ENCODE measurements at regions of chr3 and their contacts with region 1.

Region 1: GRCh38 chr3:69178838-69179739 is 56.7 kb upstream of the LMOD3 start:
- DNase-seq: no peak
- ATAC-seq: peak in 1 of 4 donors; percentile 18
- H3K4me3 ChIP-seq: no peak overlapping the region
- H3K27ac ChIP-seq: peak overlapping the region in 3 of 12 donors; percentile 7 to 43 (median 25)
- H3K4me1 ChIP-seq: peaks cover 0 to 54% (median 28%) of the 10 kb centered on the region in 12 donors
- H3K27me3 ChIP-seq: no peaks in the 10 kb centered on the region
- CTCF ChIP-seq: no peak
- POLR2A ChIP-seq: no peak

Region 2: GRCh38 chr3:69065318-69065964 is 113.6 kb before region 1 on chr3:
- intact Hi-C with region 1: no loop called
- DNase-seq: no peak
- ATAC-seq: no peak
- H3K4me3 ChIP-seq: no peak overlapping the region
- H3K27ac ChIP-seq: no peak overlapping the region
- H3K4me1 ChIP-seq: peaks cover 0 to 7% (median 0%) of the 10 kb centered on the region in 12 donors
- H3K27me3 ChIP-seq: no peaks in the 10 kb centered on the region
- CTCF ChIP-seq: no peak
- POLR2A ChIP-seq: no peak

Region 3: DNA sequence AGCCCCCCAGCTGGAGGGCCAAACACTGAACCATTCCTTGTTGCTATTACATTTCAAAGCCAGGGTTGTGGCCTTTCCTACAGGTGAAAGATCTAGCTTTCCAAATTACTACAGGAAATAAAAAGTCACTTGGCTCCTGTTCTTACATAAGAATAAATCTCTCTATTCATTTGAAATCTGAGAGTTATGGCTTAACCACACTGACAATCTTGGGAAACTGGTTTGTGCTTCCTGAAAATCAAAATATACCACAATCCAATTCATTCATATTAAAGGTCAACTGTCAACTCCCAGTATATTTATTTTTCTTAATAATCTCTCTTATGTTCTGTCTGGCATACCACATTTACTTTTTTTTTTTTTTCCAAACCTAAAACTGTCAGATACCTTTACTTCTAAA is 47.0 kb after region 1 on chr3:
- intact Hi-C with region 1: loop called in 1 of 10 experiments (anchors 10 kb)
- DNase-seq: no peak
- ATAC-seq: no peak
- H3K4me3 ChIP-seq: no peak overlapping the region
- H3K27ac ChIP-seq: no peak overlapping the region
- H3K4me1 ChIP-seq: peaks cover 0 to 5% (median 0%) of the 10 kb centered on the region in 12 donors
- H3K27me3 ChIP-seq: no peaks in the 10 kb centered on the region
- CTCF ChIP-seq: no peak
- POLR2A ChIP-seq: no peak

Region 4: GRCh38 chr3:69255928-69256327 is 76.8 kb after region 1 on chr3:
- intact Hi-C with region 1: loop called in 1 of 10 experiments (anchors 5 kb)
- DNase-seq: no peak
- ATAC-seq: peak in 1 of 4 donors; percentile 16
- H3K4me3 ChIP-seq: no peak overlapping the region
- H3K27ac ChIP-seq: no peak overlapping the region
- H3K4me1 ChIP-seq: no peaks in the 10 kb centered on the region
- H3K27me3 ChIP-seq: no peaks in the 10 kb centered on the region
- CTCF ChIP-seq: no peak
- POLR2A ChIP-seq: no peak

Region 5: DNA sequence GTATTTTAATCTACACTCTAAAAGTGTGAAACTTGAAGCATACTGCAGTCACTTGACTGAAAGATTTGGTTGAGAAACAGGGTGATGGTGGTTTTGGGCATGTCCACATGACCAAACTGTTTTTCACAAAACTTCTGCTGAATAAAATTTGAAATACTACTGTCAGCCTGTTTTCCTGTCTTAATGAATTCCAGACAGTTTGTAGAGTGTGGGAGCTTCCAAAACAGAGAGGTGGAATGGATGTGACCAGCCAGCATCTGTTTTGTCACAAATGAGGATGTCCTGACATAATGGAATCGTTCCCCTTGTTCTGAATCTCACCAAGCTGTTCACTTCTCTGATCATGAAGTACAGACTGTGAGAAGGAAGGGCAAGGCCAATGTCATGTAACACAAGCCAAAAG is 572.0 kb after region 1 on chr3:
- intact Hi-C with region 1: no loop called
- DNase-seq: no peak
- ATAC-seq: peak in 3 of 4 donors; percentile 24 to 44 (median 36)
- H3K4me3 ChIP-seq: no peak overlapping the region
- H3K27ac ChIP-seq: peak overlapping the region in 11 of 12 donors; percentile 9 to 93 (median 44)
- H3K4me1 ChIP-seq: peaks cover 0 to 86% (median 63%) of the 10 kb centered on the region in 12 donors
- H3K27me3 ChIP-seq: no peaks in the 10 kb centered on the region
- CTCF ChIP-seq: no peak
- POLR2A ChIP-seq: no peak